Activated naive CD4-positive, alpha-beta T cell treated with anti-CD3 and anti-CD28 coated beads, Interleukin-2, amount 10 ng/mL, durations not matched to agents 7 days and 5 days (primary cell): ENCODE measurements at regions of chr7 and their contacts with region 1.

Region 1: DNA sequence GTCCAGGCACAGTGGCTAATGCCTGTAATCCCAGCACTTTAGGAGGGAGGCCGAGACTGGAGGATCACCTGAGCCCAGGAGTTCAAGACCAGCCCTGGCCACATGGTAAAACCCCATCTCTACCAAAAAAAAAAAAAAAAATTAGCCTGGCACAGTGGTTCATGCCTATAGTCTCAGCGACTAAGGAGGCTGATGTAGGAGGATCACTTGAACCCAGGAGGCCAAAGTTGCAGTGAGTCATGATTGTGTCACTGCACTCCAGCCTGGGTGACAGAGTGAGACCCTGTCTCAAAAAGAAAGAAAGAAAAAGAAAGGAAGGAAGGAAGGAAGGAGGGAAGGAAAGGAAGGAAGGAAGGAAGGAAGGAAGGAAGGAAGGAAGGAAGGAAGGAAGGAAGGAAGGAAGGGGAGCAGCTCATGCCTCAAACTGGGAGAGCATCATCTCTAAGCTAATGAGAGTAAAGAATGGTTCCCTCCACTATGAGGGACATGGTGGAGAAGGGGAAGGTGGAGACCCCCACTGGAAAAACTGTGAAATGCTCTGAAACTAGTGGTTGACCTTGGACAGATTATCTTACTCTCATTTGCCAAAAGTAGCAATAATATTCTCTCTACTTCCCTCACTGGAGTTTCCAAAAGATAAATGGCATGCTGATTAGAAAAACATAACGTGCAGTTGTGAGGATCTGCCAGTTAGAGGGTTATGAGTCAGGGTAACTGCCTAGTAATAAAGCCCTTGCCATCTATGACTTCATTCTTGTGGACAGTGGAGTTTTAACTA is 16.8 kb downstream of the GIMAP5 start:
- DNase-seq: no peak
- H3K4me3 Mint-ChIP-seq: peak overlapping the region; percentile 31
- H3K27ac Mint-ChIP-seq: peak overlapping the region; percentile 92
- H3K4me1 Mint-ChIP-seq: peaks cover 77% of the 10 kb centered on the region
- H3K27me3 Mint-ChIP-seq: no peaks in the 10 kb centered on the region

Region 2: DNA sequence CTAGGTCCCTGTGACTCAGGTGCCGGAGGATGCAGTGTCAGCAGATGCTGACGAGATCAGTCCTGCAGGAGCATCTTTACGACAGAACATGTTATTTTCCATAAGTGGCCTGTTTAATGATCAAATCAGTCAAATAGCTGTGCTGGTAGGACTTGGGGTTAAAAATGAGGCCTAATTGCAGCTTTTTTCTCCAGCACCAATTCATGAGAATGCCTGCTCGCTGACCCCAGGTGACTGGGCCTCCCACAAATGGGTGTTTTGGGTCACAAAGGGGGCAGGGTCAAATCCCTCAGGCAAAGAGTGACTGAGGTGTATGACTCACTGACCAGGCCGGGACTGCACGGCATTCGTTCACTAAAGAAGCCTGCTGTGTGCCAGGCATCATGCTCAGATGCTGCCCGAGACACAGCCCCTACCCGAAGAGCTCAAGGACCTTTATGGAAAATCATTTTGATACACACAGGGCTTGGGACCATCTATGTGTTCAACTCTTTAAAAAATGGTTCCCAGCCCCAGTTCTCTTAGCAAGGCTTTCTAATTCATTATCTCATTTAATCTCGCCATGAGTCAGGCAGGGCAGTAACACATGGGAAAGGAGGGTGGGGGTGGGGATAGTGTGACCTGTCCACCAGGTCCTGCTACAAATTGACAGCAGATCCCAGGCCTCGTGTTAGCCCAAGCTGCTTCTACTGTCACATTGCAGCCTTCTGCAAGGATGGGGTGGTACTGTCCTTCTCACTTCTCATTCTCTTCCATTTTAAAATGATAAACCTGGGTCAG is 353.8 kb before region 1 on chr7:
- CTCF ChIA-PET with region 1: no interaction called
- DNase-seq: no peak
- H3K4me3 Mint-ChIP-seq: no peak overlapping the region
- H3K27ac Mint-ChIP-seq: no peak overlapping the region
- H3K4me1 Mint-ChIP-seq: peaks cover 22% of the 10 kb centered on the region
- H3K27me3 Mint-ChIP-seq: no peaks in the 10 kb centered on the region

Region 3: GRCh38 chr7:150476819-150477631 is 277.0 kb before region 1 on chr7:
- CTCF ChIA-PET with region 1: no interaction called
- DNase-seq: no peak
- H3K4me3 Mint-ChIP-seq: no peak overlapping the region
- H3K27ac Mint-ChIP-seq: peak overlapping the region; percentile 77
- H3K4me1 Mint-ChIP-seq: peaks cover 94% of the 10 kb centered on the region
- H3K27me3 Mint-ChIP-seq: no peaks in the 10 kb centered on the region

Region 4: GRCh38 chr7:150631866-150632864 is 121.8 kb before region 1 on chr7 and contains the start of gene GIMAP6:
- CTCF ChIA-PET with region 1: interaction called, 13 read pairs
- DNase-seq: peak; percentile 62
- H3K4me3 Mint-ChIP-seq: peak within 1 kb of the TSS; percentile 83
- H3K27ac Mint-ChIP-seq: peak within 1 kb of the TSS; percentile 86
- H3K4me1 Mint-ChIP-seq: peaks cover 66% of the 10 kb centered on the region
- H3K27me3 Mint-ChIP-seq: no peaks in the 10 kb centered on the region

Region 5: DNA sequence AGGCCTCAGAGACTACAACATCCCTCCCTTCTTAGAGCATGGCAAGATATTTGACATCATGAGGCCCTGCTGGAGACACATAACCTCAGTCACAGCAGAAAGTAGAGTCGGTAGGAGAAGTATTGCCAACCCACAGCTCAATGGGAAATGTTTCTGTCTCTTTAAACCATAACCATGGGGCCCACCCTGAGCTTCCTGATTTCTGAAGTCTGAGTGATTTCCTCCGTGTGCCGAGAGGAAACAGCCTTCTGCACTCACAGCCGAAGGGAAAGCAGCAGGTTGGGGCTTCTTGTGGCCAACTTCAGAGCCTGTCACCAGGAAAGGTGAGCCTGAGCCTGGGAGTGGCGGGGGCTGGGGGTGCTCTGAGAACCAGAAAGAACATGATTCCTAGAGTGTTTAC is 37.6 kb before region 1 on chr7 and contains the start of gene GIMAP1:
- CTCF ChIA-PET with region 1: interaction called, 10 read pairs
- DNase-seq: peak; percentile 79
- H3K4me3 Mint-ChIP-seq: peak within 1 kb of the TSS; percentile 88
- H3K27ac Mint-ChIP-seq: peak within 1 kb of the TSS; percentile 94
- H3K4me1 Mint-ChIP-seq: peaks cover 63% of the 10 kb centered on the region
- H3K27me3 Mint-ChIP-seq: no peaks in the 10 kb centered on the region

Region 6: GRCh38 chr7:150766334-150766709 is 12.3 kb after region 1 on chr7:
- CTCF ChIA-PET with region 1: no interaction called
- DNase-seq: no peak
- H3K4me3 Mint-ChIP-seq: no peak overlapping the region
- H3K27ac Mint-ChIP-seq: no peak overlapping the region
- H3K4me1 Mint-ChIP-seq: no peaks in the 10 kb centered on the region
- H3K27me3 Mint-ChIP-seq: peaks cover 5% of the 10 kb centered on the region

Region 7: DNA sequence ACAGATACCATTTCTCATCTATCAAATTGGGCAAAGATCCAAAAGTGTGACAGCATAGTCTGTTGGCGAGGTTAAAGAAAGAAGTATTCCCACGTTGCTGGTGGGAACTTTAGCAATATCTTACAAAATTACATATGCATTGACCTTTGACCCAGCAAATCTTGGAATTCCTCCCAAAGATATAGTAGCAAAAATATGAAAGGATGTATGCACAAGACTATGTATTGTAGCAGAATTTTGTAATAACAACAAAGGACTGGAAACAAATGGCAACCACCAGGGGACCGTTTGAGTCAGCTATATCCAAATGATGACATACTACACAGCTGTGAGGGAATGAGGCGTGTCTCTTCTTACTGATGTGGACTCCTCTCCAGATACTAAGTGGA is 173.9 kb after region 1 on chr7:
- CTCF ChIA-PET with region 1: no interaction called
- DNase-seq: no peak
- H3K4me3 Mint-ChIP-seq: no peak overlapping the region
- H3K27ac Mint-ChIP-seq: no peak overlapping the region
- H3K4me1 Mint-ChIP-seq: peaks cover 25% of the 10 kb centered on the region
- H3K27me3 Mint-ChIP-seq: peaks cover 46% of the 10 kb centered on the region